ENCODE measurements at regions of chr7 and their contacts with region 1.

Region 1: GRCh38 chr7:39465055-39465929 is 100.9 kb upstream of the YAE1 start:
- DNase-seq: peak in 3 of 10 donors; percentile 25 to 55 (median 37)
- H3K4me3 ChIP-seq: peak overlapping the region in 11 of 59 donors; percentile 1 to 31 (median 17)
- H3K27ac ChIP-seq: peak overlapping the region in 3 of 59 donors; percentile 8 to 38 (median 32)
- H3K27me3 ChIP-seq: peaks cover 0 to 5% (median 0%) of the 10 kb centered on the region in 45 donors
- CTCF ChIP-seq: peak; percentile 44 to 83 (median 73)

Region 2: GRCh38 chr7:38796626-38797501 is 668.4 kb before region 1 on chr7:
- intact Hi-C with region 1: loop called in 1 of 2 experiments (anchors 10 kb)
- DNase-seq: peak in 5 of 10 donors; percentile 42 to 77 (median 63)
- H3K4me3 ChIP-seq: no peak overlapping the region
- H3K27ac ChIP-seq: peak overlapping the region in 6 of 59 donors; percentile 5 to 62 (median 27)
- H3K27me3 ChIP-seq: no peaks in the 10 kb centered on the region
- CTCF ChIP-seq: peak; percentile 73 to 99 (median 88)

Region 3: DNA sequence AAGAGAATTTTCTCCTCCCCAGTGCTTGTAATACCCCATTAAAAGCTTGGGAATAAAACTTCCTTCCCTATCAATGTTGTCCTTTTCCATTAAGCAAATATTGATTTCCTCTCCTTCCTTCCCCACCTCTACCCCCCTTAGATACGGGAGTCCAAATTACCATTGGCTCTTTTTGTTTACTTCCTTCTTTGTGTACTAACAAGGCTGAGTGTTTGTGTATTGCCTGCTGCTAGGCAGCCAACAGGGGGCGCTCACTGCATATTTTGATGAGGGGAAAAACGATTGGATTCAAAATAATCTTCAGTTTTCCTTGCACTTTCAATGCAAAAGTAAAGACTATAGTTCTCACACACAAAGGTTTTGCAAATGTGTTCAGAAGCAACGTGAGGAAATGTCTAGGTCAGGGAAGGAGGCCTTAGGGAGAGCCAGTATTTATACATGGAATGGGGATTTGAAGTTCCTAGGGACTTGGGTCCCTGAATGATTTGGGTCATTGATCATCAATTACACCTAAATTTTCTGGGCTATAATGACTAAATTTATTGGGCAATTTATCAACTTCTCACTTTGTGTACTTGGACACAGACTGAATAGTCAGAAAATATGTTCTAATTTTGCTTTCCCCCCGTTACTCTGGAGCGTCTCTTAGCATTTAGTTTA is 532.7 kb before region 1 on chr7:
- intact Hi-C with region 1: loop called (anchors 10 kb)
- DNase-seq: peak in 9 of 10 donors; percentile 14 to 70 (median 56)
- H3K4me3 ChIP-seq: peak overlapping the region in 11 of 59 donors; percentile 1 to 22 (median 15)
- H3K27ac ChIP-seq: peak overlapping the region in 6 of 59 donors; percentile 7 to 43 (median 24)
- H3K27me3 ChIP-seq: no peaks in the 10 kb centered on the region
- CTCF ChIP-seq: peak; percentile 64 to 93 (median 86)

Region 4: GRCh38 chr7:39394105-39394680 is 71.1 kb before region 1 on chr7:
- intact Hi-C with region 1: no loop called
- DNase-seq: no peak
- H3K4me3 ChIP-seq: no peak overlapping the region
- H3K27ac ChIP-seq: no peak overlapping the region
- H3K27me3 ChIP-seq: peaks cover 0 to 15% (median 0%) of the 10 kb centered on the region in 45 donors
- CTCF ChIP-seq: no peak

Region 5: GRCh38 chr7:39732837-39733804 is 267.8 kb after region 1 on chr7:
- intact Hi-C with region 1: no loop called
- DNase-seq: peak; percentile 93 to 98 (median 96)
- H3K4me3 ChIP-seq: peak overlapping the region; percentile 54 to 89 (median 73)
- H3K27ac ChIP-seq: peak overlapping the region in 58 of 59 donors; percentile 19 to 90 (median 74)
- H3K27me3 ChIP-seq: no peaks in the 10 kb centered on the region
- CTCF ChIP-seq: peak in 14 of 56 donors; percentile 6 to 52 (median 19)